ENCODE measurements at regions of chr12 and their contacts with region 1.

Region 1: DNA sequence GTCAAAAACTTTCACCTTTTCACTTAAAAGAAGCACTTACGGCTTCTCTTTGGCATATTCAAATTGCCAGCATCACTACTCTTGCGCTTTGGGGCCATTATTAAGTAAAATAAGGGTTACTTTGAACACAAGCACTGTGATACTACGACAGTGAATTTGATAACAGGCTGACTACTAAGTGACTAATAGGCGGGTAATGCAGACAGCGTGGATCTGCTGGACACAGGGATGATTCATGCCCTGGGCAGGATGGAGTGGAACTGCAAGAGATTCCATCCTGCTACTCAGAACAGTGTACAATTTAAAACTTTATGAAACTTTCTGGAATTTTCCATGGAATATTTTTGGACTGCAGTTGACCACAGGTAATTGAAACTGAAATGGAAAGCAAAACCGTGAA is 45.9 kb downstream of the YEATS4 start:
- DNase-seq: peak; percentile 98

Region 2: GRCh38 chr12:69130064-69130463 is 275.4 kb before region 1 on chr12:
- in situ Hi-C with region 1: no loop called
- DNase-seq: peak; percentile 36

Region 3: DNA sequence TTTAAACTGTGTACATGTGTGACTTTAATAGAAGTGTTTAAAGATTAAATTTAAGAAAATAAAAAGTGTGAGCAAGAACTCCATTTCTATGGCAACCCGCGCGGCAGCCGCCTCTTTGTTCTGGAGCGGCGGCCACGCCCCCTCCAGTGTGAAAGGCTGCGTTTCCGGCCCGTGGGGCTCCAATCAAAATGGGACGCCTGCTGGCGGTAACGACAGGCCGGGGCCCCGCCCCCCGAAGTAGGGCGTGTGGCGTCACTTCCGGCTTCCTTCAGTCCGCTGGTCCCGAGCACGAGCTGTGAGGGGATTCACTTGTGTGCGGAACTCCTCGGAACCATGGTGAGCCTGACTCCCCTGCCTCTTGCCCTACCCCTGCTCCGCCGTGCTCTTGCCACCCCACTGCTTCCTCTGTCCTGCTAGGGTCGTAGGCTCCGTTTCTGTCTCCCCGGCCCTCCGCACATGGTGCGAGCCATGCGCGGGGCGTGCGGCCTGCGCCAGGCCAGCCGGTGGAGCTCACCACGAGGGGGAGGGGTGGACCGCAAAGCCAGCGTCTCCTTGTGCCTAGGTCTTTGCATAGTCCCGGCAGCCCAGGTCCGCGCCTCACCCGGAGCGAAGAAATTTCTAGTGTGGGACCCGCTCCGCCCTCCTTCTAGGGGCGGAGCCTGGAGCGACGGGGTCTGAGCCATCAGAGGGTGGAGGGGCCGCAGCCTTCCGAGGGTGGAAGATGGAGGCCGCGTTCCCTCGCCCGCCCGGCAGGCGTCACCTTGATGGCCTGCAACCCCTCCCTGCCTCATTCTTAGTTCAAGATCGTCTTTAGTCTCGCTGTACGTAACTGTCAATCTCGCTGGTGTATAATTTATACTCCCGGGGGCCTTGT is 180.0 kb after region 1 on chr12 and contains the start of gene CCT2:
- in situ Hi-C with region 1: loop called (anchors 10 kb)
- DNase-seq: peak; percentile 99